ENCODE measurements at regions of chr18 and their contacts with region 1.

Region 1: GRCh38 chr18:69518989-69519388 is 118.3 kb downstream of the DOK6 start:
- DNase-seq: peak; percentile 39
- ATAC-seq: peak; percentile 72
- H3K4me3 ChIP-seq: no peak overlapping the region
- H3K27ac ChIP-seq: no peak overlapping the region
- H3K4me1 ChIP-seq: no peaks in the 10 kb centered on the region
- H3K27me3 ChIP-seq: no peaks in the 10 kb centered on the region
- CTCF ChIP-seq: no peak

Region 2: GRCh38 chr18:69455125-69455524 is 63.9 kb before region 1 on chr18:
- CTCF ChIA-PET with region 1: no interaction called
- POLR2A ChIA-PET with region 1: no interaction called
- intact Hi-C with region 1: no loop called
- DNase-seq: no peak
- ATAC-seq: no peak
- H3K4me3 ChIP-seq: no peak overlapping the region
- H3K27ac ChIP-seq: no peak overlapping the region
- H3K4me1 ChIP-seq: no peaks in the 10 kb centered on the region
- H3K27me3 ChIP-seq: no peaks in the 10 kb centered on the region
- CTCF ChIP-seq: no peak

Region 3: GRCh38 chr18:69495841-69496533 is 23.0 kb before region 1 on chr18:
- CTCF ChIA-PET with region 1: no interaction called
- POLR2A ChIA-PET with region 1: no interaction called
- intact Hi-C with region 1: loop called (anchors 2 kb)
- DNase-seq: no peak
- ATAC-seq: no peak
- H3K4me3 ChIP-seq: no peak overlapping the region
- H3K27ac ChIP-seq: no peak overlapping the region
- H3K4me1 ChIP-seq: no peaks in the 10 kb centered on the region
- H3K27me3 ChIP-seq: 0 out of 2 replicates have a peak, but pooled peaks cover 3% of the 10 kb centered on the region
- CTCF ChIP-seq: no peak